Transverse colon (tissue), 4 donors: ENCODE measurements at regions of chr17 and their contacts with region 1.

Region 1: GRCh38 chr17:76307299-76307965 is 644 bp downstream of the QRICH2 start:
- DNase-seq: no peak
- H3K4me3 ChIP-seq: no peak overlapping the region
- H3K27ac ChIP-seq: no peak overlapping the region
- H3K4me1 ChIP-seq: peaks cover 0 to 3% (median 0%) of the 10 kb centered on the region in 4 donors
- H3K27me3 ChIP-seq: no peaks in the 10 kb centered on the region
- CTCF ChIP-seq: no peak
- EP300 ChIP-seq: no peak
- POLR2A ChIP-seq: no peak

Region 2: GRCh38 chr17:76397687-76398487 is 90.5 kb after region 1 on chr17:
- in situ Hi-C with region 1: loop called (anchors 5 to 10 kb)
- intact Hi-C with region 1: loop called (anchors 2 kb)
- DNase-seq: peak; percentile 91
- H3K4me3 ChIP-seq: no peak overlapping the region
- H3K27ac ChIP-seq: no peak overlapping the region
- H3K4me1 ChIP-seq: no peaks in the 10 kb centered on the region
- H3K27me3 ChIP-seq: no peaks in the 10 kb centered on the region
- CTCF ChIP-seq: peak; percentile 97 to 98 (median 98)
- EP300 ChIP-seq: no peak
- POLR2A ChIP-seq: no peak

Region 3: GRCh38 chr17:76408052-76408849 is 100.8 kb after region 1 on chr17:
- in situ Hi-C with region 1: loop called in 1 of 4 experiments (anchors 5 kb)
- intact Hi-C with region 1: no loop called
- DNase-seq: peak; percentile 77
- H3K4me3 ChIP-seq: no peak overlapping the region
- H3K27ac ChIP-seq: no peak overlapping the region
- H3K4me1 ChIP-seq: peaks cover 0 to 10% (median 3%) of the 10 kb centered on the region in 4 donors
- H3K27me3 ChIP-seq: no peaks in the 10 kb centered on the region
- CTCF ChIP-seq: peak; percentile 62 to 86 (median 72)
- EP300 ChIP-seq: no peak
- POLR2A ChIP-seq: no peak

Region 4: DNA sequence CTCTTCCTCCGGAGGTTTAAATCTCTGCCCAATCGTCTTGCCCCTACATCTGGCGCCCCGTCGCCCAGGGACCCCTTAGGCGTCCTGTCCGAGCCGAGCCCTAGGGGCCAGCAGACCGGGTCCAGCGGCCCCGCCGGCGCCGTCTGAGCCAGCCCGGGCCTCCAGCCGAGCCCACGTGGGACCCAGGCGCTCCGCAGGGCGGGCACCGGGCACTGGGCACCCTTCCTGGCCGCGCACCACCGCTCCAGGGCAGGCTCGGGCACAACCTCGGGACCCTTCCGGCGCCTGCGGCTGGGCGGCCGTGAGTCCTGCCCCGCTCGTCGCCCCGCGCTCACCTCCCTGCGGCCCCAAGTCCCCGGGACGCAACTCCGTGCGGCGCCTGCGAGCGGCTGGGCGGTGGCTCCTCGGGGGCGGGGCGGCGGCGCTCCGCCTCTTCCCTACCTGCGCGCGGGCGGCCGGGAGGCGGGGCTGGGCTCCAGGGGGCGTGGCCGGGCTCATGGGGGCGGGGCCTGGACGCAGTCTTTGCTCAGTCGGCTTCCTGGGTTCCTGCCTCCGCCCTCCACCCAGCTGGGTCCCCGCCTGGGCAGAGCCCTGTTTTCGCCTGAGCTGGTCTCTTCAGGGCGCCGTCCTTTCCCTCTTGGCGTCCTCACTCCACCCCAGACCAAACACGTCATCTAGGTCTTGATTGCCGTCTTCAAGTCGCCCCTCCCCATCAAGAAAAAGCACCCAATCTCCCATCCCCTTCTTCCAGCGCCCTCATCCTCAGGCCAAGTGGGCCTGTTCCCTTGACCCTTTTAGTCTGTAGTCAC is 193.8 kb after region 1 on chr17 and contains the start of gene RHBDF2:
- in situ Hi-C with region 1: no loop called
- intact Hi-C with region 1: loop called (anchors 10 kb)
- DNase-seq: peak; percentile 96
- H3K4me3 ChIP-seq: peak within 1 kb of the TSS; percentile 56 to 78 (median 72)
- H3K27ac ChIP-seq: peak within 1 kb of the TSS; percentile 80 to 87 (median 85)
- H3K4me1 ChIP-seq: peaks cover 15 to 46% (median 23%) of the 10 kb centered on the region in 4 donors
- H3K27me3 ChIP-seq: no peaks in the 10 kb centered on the region
- CTCF ChIP-seq: no peak
- EP300 ChIP-seq: no peak
- POLR2A ChIP-seq: peak; percentile 55
- total RNA-seq, gene RHBDF2: 11.3 to 47.4 (median 23.2) TPM